Activated CD4-positive, alpha-beta memory T cell treated with anti-CD3 and anti-CD28 coated beads for 36 hours (primary cell): ENCODE measurements at regions of chr18 and their contacts with region 1.

Region 1: GRCh38 chr18:62324917-62325805 is at the start of gene TNFRSF11A:
- DNase-seq: peak; percentile 79
- H3K4me3 Mint-ChIP-seq: peak within 1 kb of the TSS; percentile 79
- H3K27ac Mint-ChIP-seq: peak within 1 kb of the TSS; percentile 46
- H3K4me1 Mint-ChIP-seq: peaks cover 28% of the 10 kb centered on the region
- H3K27me3 Mint-ChIP-seq: peaks cover 68% of the 10 kb centered on the region
- total RNA-seq, gene TNFRSF11A: 5.7 to 6.1 TPM

Region 2: DNA sequence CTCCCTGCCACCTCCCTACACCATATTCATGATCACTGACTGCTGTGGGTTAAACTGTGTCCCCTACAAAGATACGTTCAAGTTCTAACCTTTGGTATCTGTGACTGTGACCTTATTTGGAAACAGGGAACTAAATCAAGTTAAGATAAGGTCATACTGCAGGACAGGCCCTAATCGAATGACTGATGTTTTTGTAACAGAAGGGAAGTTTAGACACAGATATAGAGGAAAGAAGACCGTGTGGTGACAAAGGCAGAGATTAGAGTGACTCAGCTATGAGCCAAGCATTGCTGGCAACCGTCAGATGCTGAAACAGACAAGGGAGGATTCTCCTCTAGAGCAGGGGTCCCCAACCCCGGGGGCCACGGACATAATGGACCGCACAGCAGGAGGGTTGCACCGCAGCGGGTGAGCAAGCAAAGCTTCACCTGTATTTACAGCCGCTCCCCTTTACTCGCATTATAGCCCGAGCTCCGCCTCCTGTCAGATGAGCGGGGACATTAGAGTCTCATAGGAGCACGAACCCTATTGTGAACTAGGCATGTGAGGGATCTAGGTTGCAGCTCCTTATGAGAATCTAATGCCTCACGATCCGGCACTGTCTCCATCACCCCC is 403.4 kb before region 1 on chr18:
- CTCF ChIA-PET with region 1: no interaction called
- POLR2A ChIA-PET with region 1: no interaction called
- intact Hi-C with region 1: no loop called
- DNase-seq: no peak
- H3K4me3 Mint-ChIP-seq: no peak overlapping the region
- H3K27ac Mint-ChIP-seq: no peak overlapping the region
- H3K4me1 Mint-ChIP-seq: peaks cover 33% of the 10 kb centered on the region
- H3K27me3 Mint-ChIP-seq: peaks cover 2% of the 10 kb centered on the region

Region 3: DNA sequence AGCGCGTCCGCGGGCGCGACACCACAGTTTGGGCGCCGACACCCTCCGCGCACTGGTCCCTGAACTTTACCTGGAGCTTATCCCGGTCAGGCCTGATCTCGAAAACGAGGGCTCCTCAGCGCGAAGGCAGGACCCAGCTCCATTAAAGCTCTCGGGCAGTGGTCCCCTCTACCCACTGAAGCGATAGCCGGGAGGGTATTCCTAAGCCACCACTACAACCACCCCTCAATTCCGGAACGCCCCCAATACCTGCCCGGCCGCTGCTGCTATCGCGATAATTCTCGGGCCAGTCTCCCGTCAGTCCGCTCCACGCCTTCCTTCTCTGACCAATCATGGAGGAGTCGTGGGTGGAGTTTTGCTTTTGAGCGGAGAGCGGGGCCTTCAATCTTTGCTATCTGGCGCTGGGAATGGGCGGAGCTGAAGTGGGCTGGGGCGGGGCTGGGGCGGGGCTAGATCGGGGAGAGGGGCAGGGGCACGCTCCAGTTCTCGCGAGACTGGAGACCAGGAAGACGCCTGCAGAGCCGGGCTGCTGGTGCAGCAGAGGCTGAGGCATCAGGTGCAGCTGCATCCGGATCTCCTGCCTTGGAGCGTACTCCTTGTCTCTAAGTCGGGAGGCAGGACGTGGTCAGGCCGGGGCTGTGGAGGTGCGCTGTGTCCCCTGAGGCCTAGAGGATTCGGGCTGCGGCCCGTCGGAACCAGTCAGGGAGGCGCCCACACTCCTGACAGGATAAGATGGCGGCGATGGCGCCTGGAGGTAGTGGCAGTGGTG is 138.2 kb before region 1 on chr18 and contains the starts of genes PIGN and RELCH:
- CTCF ChIA-PET with region 1: no interaction called
- POLR2A ChIA-PET with region 1: no interaction called
- intact Hi-C with region 1: loop called (anchors 2 kb)
- DNase-seq: peak; percentile 97
- H3K4me3 Mint-ChIP-seq: peak within 1 kb of the TSS; percentile 99
- H3K27ac Mint-ChIP-seq: peak within 1 kb of the TSS; percentile 93
- H3K4me1 Mint-ChIP-seq: peaks cover 51% of the 10 kb centered on the region
- H3K27me3 Mint-ChIP-seq: no peaks in the 10 kb centered on the region
- total RNA-seq, gene PIGN: 26.2 to 27.8 TPM
- total RNA-seq, gene RELCH: 16.1 to 17.7 TPM

Region 4: DNA sequence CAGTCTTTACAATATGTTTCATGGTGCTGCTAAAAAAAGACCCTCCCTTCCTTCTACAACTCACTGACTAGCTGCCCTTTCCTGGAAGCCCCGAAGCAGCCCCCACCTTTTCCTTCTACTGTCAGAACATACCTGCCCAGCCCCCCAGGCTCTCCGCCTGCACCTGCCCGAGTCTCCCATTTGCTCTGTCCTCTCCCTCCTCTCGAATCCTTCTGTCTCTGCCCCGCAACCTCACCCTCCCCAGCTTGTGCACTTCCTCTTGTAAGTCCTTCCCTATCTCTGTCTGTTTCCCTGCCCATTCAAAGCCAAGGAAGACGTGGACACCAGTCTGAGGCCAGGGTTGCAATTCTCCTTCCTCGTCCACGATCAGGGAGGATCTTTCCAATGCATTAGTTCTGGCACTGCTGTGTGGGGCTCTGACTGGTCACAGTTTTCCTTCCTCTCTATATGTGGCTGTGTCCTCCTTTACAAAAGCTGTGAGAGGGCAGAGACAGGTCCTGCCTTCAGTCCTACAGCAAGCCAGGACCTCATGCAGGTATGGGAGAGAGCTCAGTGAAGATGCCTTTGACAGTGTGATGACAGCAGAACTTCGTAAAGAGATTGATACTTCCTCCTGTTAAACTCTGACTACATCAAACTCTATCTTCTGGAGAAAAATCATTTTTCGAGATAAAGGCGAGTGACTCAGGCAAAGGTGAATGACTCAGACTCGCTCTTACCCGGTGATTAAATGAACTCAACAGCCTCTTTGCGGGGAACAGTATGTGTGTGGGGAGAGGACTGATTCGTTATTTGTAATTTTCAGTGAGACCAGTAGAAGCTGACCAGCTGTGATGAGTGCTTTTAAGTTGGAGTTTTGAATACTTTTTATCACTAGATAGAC is 14.2 kb after region 1 on chr18:
- CTCF ChIA-PET with region 1: interaction called, 3 read pairs
- POLR2A ChIA-PET with region 1: interaction called, 3 read pairs
- intact Hi-C with region 1: loop called (anchors 1 kb)
- DNase-seq: peak; percentile 53
- H3K4me3 Mint-ChIP-seq: peak overlapping the region; percentile 31
- H3K27ac Mint-ChIP-seq: peak overlapping the region; percentile 73
- H3K4me1 Mint-ChIP-seq: peaks cover 29% of the 10 kb centered on the region
- H3K27me3 Mint-ChIP-seq: peaks cover 43% of the 10 kb centered on the region

Region 5: DNA sequence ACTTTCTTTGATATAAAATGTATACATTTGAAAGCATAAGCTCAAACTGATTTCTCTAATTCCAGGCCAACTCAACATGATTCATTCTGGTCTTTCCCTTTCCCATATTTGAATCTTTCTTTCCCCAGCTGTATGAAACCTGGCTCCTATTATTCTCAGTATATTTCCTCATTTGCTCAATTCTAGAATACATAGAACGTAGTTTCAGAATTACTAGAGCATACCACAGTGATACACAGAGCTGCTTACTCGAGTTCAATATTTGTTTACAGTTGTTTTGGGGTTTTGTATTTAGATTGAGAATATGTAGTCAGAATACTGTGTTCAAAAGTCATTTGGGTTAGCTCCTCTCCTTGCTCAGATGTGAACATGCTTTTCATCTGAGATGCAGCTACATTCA is 42.9 kb after region 1 on chr18:
- CTCF ChIA-PET with region 1: interaction called, 4 read pairs
- POLR2A ChIA-PET with region 1: no interaction called
- intact Hi-C with region 1: loop called (anchors 5 kb)
- DNase-seq: no peak
- H3K4me3 Mint-ChIP-seq: no peak overlapping the region
- H3K27ac Mint-ChIP-seq: no peak overlapping the region
- H3K4me1 Mint-ChIP-seq: peaks cover 15% of the 10 kb centered on the region
- H3K27me3 Mint-ChIP-seq: peaks cover 3% of the 10 kb centered on the region

Region 6: GRCh38 chr18:62396381-62396780 is 71.2 kb after region 1 on chr18:
- CTCF ChIA-PET with region 1: interaction called, 3 read pairs
- POLR2A ChIA-PET with region 1: no interaction called
- intact Hi-C with region 1: loop called (anchors 2 kb)
- DNase-seq: peak; percentile 58
- H3K4me3 Mint-ChIP-seq: no peak overlapping the region
- H3K27ac Mint-ChIP-seq: peak overlapping the region; percentile 19
- H3K4me1 Mint-ChIP-seq: peaks cover 27% of the 10 kb centered on the region
- H3K27me3 Mint-ChIP-seq: peaks cover 15% of the 10 kb centered on the region

Region 7: DNA sequence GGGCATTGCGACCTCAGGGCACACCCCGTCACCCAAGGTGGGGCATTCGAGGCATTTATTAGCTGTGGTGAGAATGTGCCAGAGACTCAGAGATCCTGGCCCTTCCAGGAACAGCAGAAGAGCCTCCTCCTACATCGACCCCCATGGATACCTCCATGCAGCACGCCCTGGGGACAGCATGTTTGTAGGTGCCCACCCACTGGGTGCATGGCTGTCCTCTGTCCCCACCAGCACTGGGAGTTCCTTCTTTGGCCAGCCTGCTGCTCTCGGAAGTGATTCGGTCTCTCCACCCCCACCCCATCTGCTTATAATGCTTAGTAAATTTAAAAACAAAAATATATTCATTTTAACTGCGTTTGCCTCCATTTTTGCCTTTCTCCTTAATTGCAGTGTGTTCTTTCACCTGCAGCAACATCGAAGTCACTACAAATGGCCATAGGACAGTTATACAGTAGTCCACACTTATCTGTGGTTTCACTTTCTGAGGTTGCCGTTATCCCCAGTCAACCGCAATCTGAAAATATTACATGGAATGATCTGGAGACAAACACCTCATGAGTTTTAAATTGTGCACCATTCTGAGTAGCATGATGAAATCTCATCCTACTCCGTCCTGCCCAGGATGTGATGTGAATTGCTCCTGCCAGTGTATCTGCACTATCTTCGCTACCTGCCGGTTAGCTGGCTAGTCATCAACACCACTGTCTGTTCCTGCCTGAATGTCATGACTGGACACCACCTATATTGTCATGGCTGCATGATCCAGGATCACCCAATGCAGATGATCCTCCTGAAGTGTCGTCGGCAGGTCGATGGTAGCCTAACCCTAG is 168.1 kb after region 1 on chr18:
- CTCF ChIA-PET with region 1: no interaction called
- POLR2A ChIA-PET with region 1: no interaction called
- intact Hi-C with region 1: no loop called
- DNase-seq: no peak
- H3K4me3 Mint-ChIP-seq: no peak overlapping the region
- H3K27ac Mint-ChIP-seq: no peak overlapping the region
- H3K4me1 Mint-ChIP-seq: no peaks in the 10 kb centered on the region
- H3K27me3 Mint-ChIP-seq: peaks cover 8% of the 10 kb centered on the region

Region 8: DNA sequence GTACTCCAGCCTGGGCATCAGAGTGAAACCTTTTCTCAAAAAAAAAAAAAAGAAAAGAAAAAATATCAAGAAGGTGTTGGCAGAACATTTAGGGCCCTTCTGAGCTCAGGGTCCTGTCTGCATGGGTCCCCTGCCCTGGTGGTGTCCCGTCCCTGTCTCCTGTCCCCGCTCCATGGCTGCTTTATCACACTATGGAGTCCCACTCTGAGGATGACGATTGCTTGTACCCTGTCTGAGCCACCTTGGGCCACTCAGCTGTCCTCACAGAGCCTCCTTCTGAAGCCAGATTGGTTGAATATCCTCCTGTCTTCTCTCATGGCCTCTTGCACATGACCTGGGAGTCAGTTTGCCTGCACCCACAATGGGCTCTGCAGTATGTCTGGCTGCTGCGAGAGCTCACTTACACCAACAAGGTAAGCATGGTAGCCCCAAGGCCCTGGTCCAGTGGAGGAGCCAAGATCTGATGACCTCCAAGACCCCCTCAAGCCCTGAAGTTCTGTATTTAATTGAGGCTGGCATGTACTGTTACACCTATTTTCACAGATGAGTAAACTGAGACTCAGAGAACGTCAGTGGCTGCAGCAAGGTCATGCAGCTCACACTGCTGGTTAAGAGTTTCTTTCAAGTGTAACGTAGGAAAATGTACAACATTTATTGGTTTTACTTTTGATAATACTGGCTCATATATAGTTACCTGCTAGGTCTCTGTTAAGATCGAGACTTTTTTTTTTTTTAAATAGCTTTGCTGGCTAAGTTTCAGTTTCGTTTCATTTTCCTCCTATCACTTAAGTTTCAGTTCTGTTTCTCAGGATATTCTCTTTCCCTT is 180.7 kb after region 1 on chr18:
- CTCF ChIA-PET with region 1: interaction called, 4 read pairs
- POLR2A ChIA-PET with region 1: no interaction called
- intact Hi-C with region 1: loop called (anchors 5 kb)
- DNase-seq: peak; percentile 66
- H3K4me3 Mint-ChIP-seq: peak overlapping the region; percentile 58
- H3K27ac Mint-ChIP-seq: peak overlapping the region; percentile 88
- H3K4me1 Mint-ChIP-seq: peaks cover 24% of the 10 kb centered on the region
- H3K27me3 Mint-ChIP-seq: no peaks in the 10 kb centered on the region

Region 9: DNA sequence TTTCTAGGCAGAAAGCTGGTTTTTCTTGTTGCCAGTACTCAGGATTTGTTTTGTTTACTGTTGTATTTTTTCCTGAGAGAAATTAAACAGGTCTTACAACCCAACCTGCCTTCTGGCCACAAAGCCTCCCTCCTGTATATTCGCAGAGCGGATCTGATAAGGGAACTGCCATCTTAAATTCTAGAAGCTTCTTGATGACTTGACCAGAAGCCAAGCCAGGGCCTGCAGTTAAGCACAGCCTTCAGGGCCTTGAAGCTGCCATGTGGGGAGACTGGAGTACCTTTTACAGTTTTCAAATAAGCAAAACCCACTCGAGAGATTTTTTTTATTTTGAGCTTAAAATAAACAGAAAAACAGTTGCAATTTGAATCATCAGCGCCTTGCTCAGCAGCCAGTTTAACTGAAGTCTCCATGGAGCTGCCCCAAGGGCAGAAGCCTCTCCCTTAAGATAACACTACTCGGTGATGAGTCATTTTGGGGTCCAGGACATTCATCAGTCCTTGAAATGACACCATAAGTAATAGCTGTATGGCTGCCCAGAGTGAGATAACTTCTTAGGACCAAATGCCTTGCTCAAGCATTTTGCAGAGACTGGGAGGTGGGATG is 338.7 kb after region 1 on chr18:
- CTCF ChIA-PET with region 1: no interaction called
- POLR2A ChIA-PET with region 1: no interaction called
- intact Hi-C with region 1: no loop called
- DNase-seq: no peak
- H3K4me3 Mint-ChIP-seq: no peak overlapping the region
- H3K27ac Mint-ChIP-seq: no peak overlapping the region
- H3K4me1 Mint-ChIP-seq: no peaks in the 10 kb centered on the region
- H3K27me3 Mint-ChIP-seq: no peaks in the 10 kb centered on the region